ENCODE measurements at regions of chr9 and their contacts with region 1.

Region 1: GRCh38 chr9:88388172-88388885 is at the start of gene SPIN1:
- DNase-seq: peak; percentile 80
- H3K4me3 Mint-ChIP-seq: peak within 1 kb of the TSS; percentile 93
- H3K27ac Mint-ChIP-seq: peak within 1 kb of the TSS; percentile 94
- H3K4me1 Mint-ChIP-seq: peaks cover 33% of the 10 kb centered on the region
- H3K27me3 Mint-ChIP-seq: no peaks in the 10 kb centered on the region
- total RNA-seq, gene SPIN1: 26.5 and 32.6 TPM in 2 replicates

Region 2: GRCh38 chr9:88106491-88106890 is 281.8 kb before region 1 on chr9:
- intact Hi-C with region 1: loop called (anchors 5 kb)
- DNase-seq: no peak
- H3K4me3 Mint-ChIP-seq: no peak overlapping the region
- H3K27ac Mint-ChIP-seq: no peak overlapping the region
- H3K4me1 Mint-ChIP-seq: no peaks in the 10 kb centered on the region
- H3K27me3 Mint-ChIP-seq: peaks cover 31% of the 10 kb centered on the region

Region 3: DNA sequence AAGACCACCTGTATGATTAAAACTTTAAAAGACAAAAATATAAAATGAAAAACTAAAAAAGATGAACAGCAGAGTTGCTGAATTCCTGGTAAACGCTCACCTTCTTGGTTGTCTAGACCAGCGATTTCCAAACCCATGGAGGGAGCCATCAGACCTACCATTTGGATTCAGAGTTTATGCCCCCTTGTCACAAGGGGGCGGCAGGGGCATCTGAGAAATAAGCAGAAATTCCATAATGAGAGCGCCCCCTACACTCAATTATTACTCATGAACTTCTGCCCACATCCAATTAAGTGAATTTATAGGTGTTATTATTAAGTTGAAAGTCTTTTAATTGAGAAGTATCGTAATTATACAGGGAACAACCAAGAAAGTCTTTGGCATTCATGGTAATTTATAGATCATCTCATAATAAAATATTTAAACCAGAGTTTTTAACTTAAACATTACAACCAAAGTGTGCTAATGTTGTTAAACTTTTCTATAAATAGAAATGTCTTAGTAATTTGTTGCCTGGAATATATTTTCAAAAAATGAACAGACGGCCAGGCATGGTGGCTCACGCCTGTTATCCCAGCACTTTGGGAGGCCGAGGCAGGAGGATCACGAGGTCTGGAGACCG is 214.8 kb before region 1 on chr9:
- intact Hi-C with region 1: loop called (anchors 2 kb)
- DNase-seq: peak; percentile 30
- H3K4me3 Mint-ChIP-seq: no peak overlapping the region
- H3K27ac Mint-ChIP-seq: no peak overlapping the region
- H3K4me1 Mint-ChIP-seq: peaks cover 8% of the 10 kb centered on the region
- H3K27me3 Mint-ChIP-seq: peaks cover 27% of the 10 kb centered on the region

Region 4: GRCh38 chr9:88313364-88314220 is 74.7 kb before region 1 on chr9:
- intact Hi-C with region 1: loop called (anchors 1 kb)
- DNase-seq: no peak
- H3K4me3 Mint-ChIP-seq: peak overlapping the region; percentile 37
- H3K27ac Mint-ChIP-seq: peak overlapping the region; percentile 91
- H3K4me1 Mint-ChIP-seq: peaks cover 47% of the 10 kb centered on the region
- H3K27me3 Mint-ChIP-seq: no peaks in the 10 kb centered on the region

Region 5: DNA sequence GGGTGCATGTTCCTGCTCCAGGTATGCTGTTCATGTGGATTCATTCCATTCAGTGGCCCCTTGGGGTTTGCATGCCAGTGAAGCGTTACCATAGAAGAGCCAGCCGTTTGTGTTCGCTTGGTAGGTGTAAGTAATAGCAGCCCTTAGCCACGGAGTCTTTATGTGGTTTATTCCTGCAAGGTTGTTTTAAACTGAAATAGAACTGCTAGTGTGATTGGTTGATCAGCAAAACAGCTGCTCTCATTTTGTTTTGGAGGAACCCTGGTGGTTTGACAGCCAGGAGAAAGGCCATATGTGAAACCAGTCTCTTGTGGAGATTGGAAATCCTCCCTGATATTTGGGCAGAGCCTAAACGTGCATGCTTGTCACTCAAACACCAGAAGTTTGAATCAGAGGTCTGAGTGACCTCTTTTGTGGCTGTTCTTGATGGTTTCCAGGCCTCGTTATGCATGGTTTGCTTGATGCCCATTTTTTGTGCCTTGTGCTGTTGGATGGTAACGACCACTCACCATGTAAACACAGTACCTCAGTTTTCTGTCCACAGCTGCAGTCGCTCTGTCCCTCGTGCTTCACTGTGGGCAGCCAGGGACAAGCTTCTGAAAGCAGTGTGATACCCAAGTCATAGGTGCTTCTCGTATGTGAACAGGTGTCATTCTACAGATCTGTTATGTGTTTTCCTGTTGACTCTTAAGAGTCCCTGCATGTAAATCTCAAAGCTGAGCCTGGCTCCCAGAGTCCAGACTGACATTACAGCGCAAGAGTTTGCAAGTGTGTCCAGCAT is 88.4 kb after region 1 on chr9:
- intact Hi-C with region 1: loop called (anchors 10 kb)
- DNase-seq: no peak
- H3K4me3 Mint-ChIP-seq: no peak overlapping the region
- H3K27ac Mint-ChIP-seq: no peak overlapping the region
- H3K4me1 Mint-ChIP-seq: peaks cover 15% of the 10 kb centered on the region
- H3K27me3 Mint-ChIP-seq: no peaks in the 10 kb centered on the region